ENCODE measurements at regions of chr14 and their contacts with region 1.

Region 1: GRCh38 chr14:73713803-73714655 is at the start of gene PNMA1:
- DNase-seq: peak; percentile 86
- ATAC-seq: peak; percentile 80
- H3K4me3 Mint-ChIP-seq: peak within 1 kb of the TSS; percentile 95
- H3K27ac Mint-ChIP-seq: peak within 1 kb of the TSS; percentile 92
- H3K4me1 Mint-ChIP-seq: peaks cover 25% of the 10 kb centered on the region
- H3K27me3 Mint-ChIP-seq: no peaks in the 10 kb centered on the region
- CTCF ChIP-seq: no peak
- total RNA-seq, gene PNMA1: 19.9 and 22.2 TPM in 2 replicates

Region 2: DNA sequence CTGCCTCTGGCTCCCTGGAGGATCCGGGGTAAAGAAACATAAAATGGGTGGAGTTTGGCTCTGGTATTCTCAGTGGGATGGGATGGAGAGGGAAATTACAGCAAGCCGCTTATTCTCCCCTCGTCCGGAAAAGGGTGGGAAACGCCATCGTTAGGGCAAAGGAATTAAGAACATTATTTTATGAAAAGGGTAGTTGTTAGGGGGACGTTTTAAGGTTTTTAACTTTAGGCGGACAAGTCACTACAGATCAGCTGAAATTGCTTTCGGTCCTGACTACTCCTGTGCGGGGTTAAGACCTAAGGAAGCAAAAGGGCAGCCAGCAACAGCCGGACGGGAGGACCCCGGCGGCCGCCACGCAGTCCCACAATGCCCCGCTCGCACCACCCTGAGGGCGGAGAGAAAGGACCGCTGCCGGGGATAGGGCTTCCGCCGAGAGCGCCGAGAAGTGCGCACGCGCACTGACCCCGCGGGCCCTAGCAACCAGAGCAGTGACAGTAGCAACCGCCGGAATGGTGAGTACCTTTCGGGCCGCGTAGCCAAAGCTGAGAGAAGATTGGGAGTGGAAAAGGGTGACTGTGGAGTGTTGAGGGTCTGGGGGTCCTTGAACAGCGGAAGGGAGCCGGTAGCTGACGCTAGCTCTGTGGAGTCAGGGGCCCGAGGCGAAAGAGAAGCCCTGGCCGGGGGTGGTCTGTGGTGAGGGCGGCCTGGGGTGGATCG is 69.3 kb before region 1 on chr14 and contains the start of gene DNAL1:
- CTCF ChIA-PET with region 1: no interaction called
- POLR2A ChIA-PET with region 1: interaction called, 3 read pairs
- intact Hi-C with region 1: loop called (anchors 2 kb)
- DNase-seq: peak; percentile 89
- ATAC-seq: peak; percentile 99
- H3K4me3 Mint-ChIP-seq: peak within 1 kb of the TSS; percentile 93
- H3K27ac Mint-ChIP-seq: peak within 1 kb of the TSS; percentile 87
- H3K4me1 Mint-ChIP-seq: peaks cover 14% of the 10 kb centered on the region
- H3K27me3 Mint-ChIP-seq: no peaks in the 10 kb centered on the region
- CTCF ChIP-seq: no peak
- total RNA-seq, gene DNAL1: 7.7 and 7.8 TPM in 2 replicates

Region 3: DNA sequence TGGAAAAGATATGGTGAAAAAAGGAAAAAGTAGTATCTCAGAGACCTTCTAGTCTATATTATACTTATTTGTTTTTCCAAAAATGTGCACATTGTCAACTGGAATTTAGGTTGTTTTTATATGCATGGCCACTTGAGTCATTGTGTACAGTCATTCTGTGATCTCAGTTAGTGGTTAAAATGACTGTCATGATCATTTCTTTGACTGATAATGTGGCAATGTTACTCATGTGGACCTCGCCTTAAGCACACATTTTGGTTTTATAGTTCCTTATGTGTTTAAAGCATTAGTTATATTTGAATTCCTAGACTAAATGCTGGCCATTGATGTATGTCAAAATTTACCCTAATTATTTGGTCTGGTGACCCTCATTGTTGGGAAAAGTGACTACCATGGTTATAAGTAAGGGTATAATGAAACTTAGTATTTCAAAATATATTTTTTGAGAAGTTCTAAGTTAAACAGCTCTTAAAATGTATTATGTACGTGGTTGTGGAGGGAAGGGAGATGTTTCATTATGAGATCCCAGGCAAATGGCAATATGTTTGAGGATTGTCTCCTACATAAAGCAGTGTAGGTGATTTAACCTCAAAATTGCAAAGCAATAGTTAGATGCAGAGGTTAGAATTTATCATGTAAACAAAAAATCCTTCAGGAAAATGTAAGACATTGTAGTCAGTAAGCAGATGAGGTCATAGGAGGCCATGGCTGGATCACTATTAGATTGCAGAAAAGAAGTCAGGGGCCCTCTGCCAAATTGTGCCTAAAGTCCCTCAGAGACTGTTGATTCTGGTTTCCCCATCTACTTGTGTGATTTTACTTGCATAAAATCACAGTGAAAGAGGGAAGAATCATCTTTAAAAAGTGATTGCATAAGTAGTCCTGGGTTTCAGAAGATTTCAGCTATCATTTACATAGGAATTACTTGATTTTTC is 17.3 kb before region 1 on chr14:
- CTCF ChIA-PET with region 1: no interaction called
- POLR2A ChIA-PET with region 1: interaction called, 9 read pairs
- intact Hi-C with region 1: loop called (anchors 2 kb)
- DNase-seq: no peak
- ATAC-seq: peak; percentile 73
- H3K4me3 Mint-ChIP-seq: peak overlapping the region; percentile 6
- H3K27ac Mint-ChIP-seq: peak overlapping the region; percentile 78
- H3K4me1 Mint-ChIP-seq: peaks cover 11% of the 10 kb centered on the region
- H3K27me3 Mint-ChIP-seq: no peaks in the 10 kb centered on the region
- CTCF ChIP-seq: no peak

Region 4: DNA sequence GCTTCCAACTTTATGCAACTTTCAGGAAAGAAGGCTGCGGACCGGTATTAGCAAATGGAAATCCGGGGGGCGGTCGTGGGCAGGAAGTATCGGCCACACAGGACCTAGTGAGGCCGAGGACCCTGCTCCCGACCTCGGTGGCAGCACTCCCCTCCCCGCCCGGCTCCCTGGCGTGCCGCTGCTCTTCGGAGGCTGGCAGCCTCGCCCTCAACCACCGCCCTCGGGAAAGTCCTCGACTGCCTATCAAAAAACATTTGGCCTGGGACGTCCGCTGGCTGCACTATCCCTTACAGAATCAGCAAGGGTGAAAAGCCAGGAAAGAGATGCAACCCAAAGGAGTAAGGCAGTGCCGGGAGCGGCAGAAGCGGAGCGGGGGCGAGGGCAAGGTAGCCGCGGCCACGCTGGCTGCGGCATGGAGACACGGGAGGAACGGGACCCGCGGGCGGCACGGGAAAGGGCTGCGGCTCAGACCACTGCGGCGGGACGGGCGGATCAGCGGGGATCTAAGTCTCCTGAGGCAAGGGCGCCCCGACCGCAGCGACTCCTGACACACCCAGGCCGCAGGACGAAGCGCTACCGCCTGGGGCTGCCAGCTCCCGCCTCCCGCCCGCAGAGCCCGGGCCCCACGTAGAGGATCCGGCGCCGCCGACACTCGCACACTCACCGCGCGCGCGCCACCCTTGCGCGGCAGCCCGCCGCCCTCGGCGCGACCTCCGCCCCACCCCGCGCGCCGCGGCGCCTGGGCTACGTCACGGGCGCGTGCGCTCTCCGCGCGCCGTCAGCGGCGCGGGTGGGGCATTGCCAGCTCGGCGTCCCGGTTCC is 304.8 kb after region 1 on chr14 and contains the starts of genes BBOF1 and ENTPD5:
- CTCF ChIA-PET with region 1: no interaction called
- POLR2A ChIA-PET with region 1: no interaction called
- intact Hi-C with region 1: loop called (anchors 5 kb)
- DNase-seq: peak; percentile 82
- ATAC-seq: peak; percentile 96
- H3K4me3 Mint-ChIP-seq: peak within 1 kb of the TSS; percentile 95
- H3K27ac Mint-ChIP-seq: peak within 1 kb of the TSS; percentile 88
- H3K4me1 Mint-ChIP-seq: peaks cover 14% of the 10 kb centered on the region
- H3K27me3 Mint-ChIP-seq: no peaks in the 10 kb centered on the region
- CTCF ChIP-seq: no peak
- total RNA-seq, gene BBOF1: 1.6 and 2.2 TPM in 2 replicates
- total RNA-seq, gene ENTPD5: 9.3 and 10.4 TPM in 2 replicates

Measured in activated B cell treated with CpG ODN at 0.5 μM for 24 hours (primary cell).